Activated B cell treated with CpG ODN at 0.5 μM for 24 hours (primary cell): ENCODE measurements at regions of chrX and their contacts with region 1.

Region 1: DNA sequence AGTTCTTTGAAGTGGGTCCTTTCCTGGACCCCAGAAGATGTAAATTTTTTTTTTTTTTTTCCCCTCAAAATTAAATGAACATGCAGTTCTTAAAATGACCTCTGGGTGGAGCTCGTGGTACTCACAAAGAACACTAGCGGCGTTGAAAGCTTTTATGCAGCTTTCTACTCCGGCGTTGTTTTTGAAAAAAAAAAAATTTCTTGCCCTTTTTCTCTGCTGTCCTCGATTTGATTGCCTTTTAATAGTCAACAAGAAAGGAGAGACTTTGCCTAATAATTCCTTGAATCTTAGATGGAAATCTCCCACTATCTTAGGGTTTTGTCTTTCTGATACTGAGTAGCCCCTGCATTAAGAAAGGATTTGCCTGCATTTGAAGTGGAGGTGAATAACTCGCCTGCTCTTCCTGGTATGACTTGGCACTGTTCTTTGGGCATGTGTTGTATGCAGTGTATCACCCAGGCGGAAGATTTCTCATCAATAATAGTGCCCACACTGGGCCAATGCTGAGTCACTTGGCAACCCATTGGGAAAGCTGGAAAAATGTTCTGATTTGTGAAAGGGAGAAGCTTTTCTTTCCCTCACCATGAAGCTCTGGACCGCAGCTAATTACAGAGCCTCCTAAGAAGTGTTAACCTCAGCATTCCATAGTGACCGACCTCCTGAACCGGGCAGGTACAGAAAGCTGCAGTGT is 104.0 kb downstream of the PHEX start:
- DNase-seq: no peak
- ATAC-seq: no peak
- H3K4me3 Mint-ChIP-seq: no peak overlapping the region
- H3K27ac Mint-ChIP-seq: no peak overlapping the region
- H3K4me1 Mint-ChIP-seq: peaks cover 4% of the 10 kb centered on the region
- H3K27me3 Mint-ChIP-seq: no peaks in the 10 kb centered on the region
- CTCF ChIP-seq: no peak

Region 2: DNA sequence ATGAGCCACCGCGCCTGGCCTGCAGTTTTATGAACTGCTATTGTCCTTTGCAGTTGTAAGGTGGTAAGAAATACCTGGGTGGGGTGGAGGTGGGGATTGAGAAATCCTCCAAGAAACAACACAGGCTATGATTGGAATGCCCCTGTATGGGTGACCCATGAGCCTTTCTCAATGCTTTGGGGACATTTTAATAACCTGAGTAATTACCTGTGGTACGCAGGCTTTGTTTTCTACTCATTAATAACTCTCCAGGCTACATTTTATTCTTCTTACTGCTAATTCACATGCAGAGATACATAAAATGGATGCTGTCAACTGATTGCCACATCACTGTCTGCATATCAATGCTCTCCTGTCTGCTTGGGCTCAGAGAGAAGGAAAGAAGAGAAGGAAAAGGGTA is 62.2 kb before region 1 on chrX:
- CTCF ChIA-PET with region 1: no interaction called
- POLR2A ChIA-PET with region 1: no interaction called
- intact Hi-C with region 1: no loop called
- DNase-seq: no peak
- ATAC-seq: no peak
- H3K4me3 Mint-ChIP-seq: no peak overlapping the region
- H3K27ac Mint-ChIP-seq: no peak overlapping the region
- H3K4me1 Mint-ChIP-seq: peaks cover 11% of the 10 kb centered on the region
- H3K27me3 Mint-ChIP-seq: no peaks in the 10 kb centered on the region
- CTCF ChIP-seq: no peak

Region 3: GRCh38 chrX:22534643-22535042 is 398.5 kb after region 1 on chrX:
- CTCF ChIA-PET with region 1: interaction called, 3 read pairs
- POLR2A ChIA-PET with region 1: no interaction called
- intact Hi-C with region 1: loop called (anchors 2 kb)
- DNase-seq: no peak
- ATAC-seq: no peak
- H3K4me3 Mint-ChIP-seq: no peak overlapping the region
- H3K27ac Mint-ChIP-seq: no peak overlapping the region
- H3K4me1 Mint-ChIP-seq: peaks cover 3% of the 10 kb centered on the region
- H3K27me3 Mint-ChIP-seq: peaks cover 5% of the 10 kb centered on the region
- CTCF ChIP-seq: no peak

Region 4: GRCh38 chrX:22748093-22748999 is 612.2 kb after region 1 on chrX:
- CTCF ChIA-PET with region 1: interaction called, 17 read pairs
- POLR2A ChIA-PET with region 1: no interaction called
- intact Hi-C with region 1: loop called (anchors 1 kb)
- DNase-seq: peak; percentile 14
- ATAC-seq: peak; percentile 64
- H3K4me3 Mint-ChIP-seq: no peak overlapping the region
- H3K27ac Mint-ChIP-seq: no peak overlapping the region
- H3K4me1 Mint-ChIP-seq: no peaks in the 10 kb centered on the region
- H3K27me3 Mint-ChIP-seq: no peaks in the 10 kb centered on the region
- CTCF ChIP-seq: no peak

Region 5: GRCh38 chrX:22963196-22963595 is 827.1 kb after region 1 on chrX:
- CTCF ChIA-PET with region 1: no interaction called
- POLR2A ChIA-PET with region 1: no interaction called
- intact Hi-C with region 1: no loop called
- DNase-seq: no peak
- ATAC-seq: no peak
- H3K4me3 Mint-ChIP-seq: no peak overlapping the region
- H3K27ac Mint-ChIP-seq: no peak overlapping the region
- H3K4me1 Mint-ChIP-seq: no peaks in the 10 kb centered on the region
- H3K27me3 Mint-ChIP-seq: no peaks in the 10 kb centered on the region
- CTCF ChIP-seq: no peak

Region 6: GRCh38 chrX:23317799-23318724 is 1181.9 kb after region 1 on chrX:
- CTCF ChIA-PET with region 1: interaction called, 7 read pairs
- POLR2A ChIA-PET with region 1: no interaction called
- intact Hi-C with region 1: loop called (anchors 2 kb)
- DNase-seq: no peak
- ATAC-seq: peak; percentile 57
- H3K4me3 Mint-ChIP-seq: no peak overlapping the region
- H3K27ac Mint-ChIP-seq: no peak overlapping the region
- H3K4me1 Mint-ChIP-seq: no peaks in the 10 kb centered on the region
- H3K27me3 Mint-ChIP-seq: no peaks in the 10 kb centered on the region
- CTCF ChIP-seq: no peak